ENCODE measurements at regions of chr10 and their contacts with region 1.

Region 1: GRCh38 chr10:123008439-123009205 is at the starts of genes ACADSB and IKZF5:
- DNase-seq: peak; percentile 97
- ATAC-seq: peak; percentile 95 to 96
- H3K4me3 ChIP-seq: peak within 1 kb of the TSS; percentile 95 to 99 (median 97)
- H3K27ac ChIP-seq: peak within 1 kb of the TSS; percentile 93 to 99 (median 96)
- H3K4me1 ChIP-seq: peaks cover 38 to 46% of the 10 kb centered on the region in 2 donors
- H3K27me3 ChIP-seq: no peaks in the 10 kb centered on the region
- CTCF ChIP-seq: no peak
- POLR2A ChIP-seq: peak; percentile 78 to 85
- total RNA-seq, gene ACADSB: 16.2 to 40.2 (median 22.0) TPM
- total RNA-seq, gene IKZF5: 4.3 to 11.0 (median 7.7) TPM

Region 2: GRCh38 chr10:122953827-122954730 is 54.5 kb before region 1 on chr10 and contains the start of gene C10orf88:
- in situ Hi-C with region 1: no loop called
- intact Hi-C with region 1: loop called (anchors 2 kb)
- DNase-seq: peak; percentile 95 to 98
- ATAC-seq: peak; percentile 99
- H3K4me3 ChIP-seq: peak within 1 kb of the TSS; percentile 83 to 92 (median 88)
- H3K27ac ChIP-seq: peak within 1 kb of the TSS; percentile 75 to 86 (median 81)
- H3K4me1 ChIP-seq: peaks cover 10 to 22% of the 10 kb centered on the region in 2 donors
- H3K27me3 ChIP-seq: no peaks in the 10 kb centered on the region
- CTCF ChIP-seq: no peak
- POLR2A ChIP-seq: no peak
- total RNA-seq, gene C10orf88: 4.2 to 9.6 (median 6.8) TPM

Region 3: GRCh38 chr10:122980209-122981065 is 28.2 kb before region 1 on chr10 and contains the start of gene PSTK:
- in situ Hi-C with region 1: no loop called
- intact Hi-C with region 1: loop called (anchors 1 kb)
- DNase-seq: peak; percentile 80 to 84
- ATAC-seq: peak; percentile 97 to 98
- H3K4me3 ChIP-seq: peak within 1 kb of the TSS; percentile 72 to 88 (median 78)
- H3K27ac ChIP-seq: peak within 1 kb of the TSS; percentile 85 to 96 (median 90)
- H3K4me1 ChIP-seq: peaks cover 11 to 12% of the 10 kb centered on the region in 2 donors
- H3K27me3 ChIP-seq: no peaks in the 10 kb centered on the region
- CTCF ChIP-seq: peak; percentile 97 to 98 (median 98)
- POLR2A ChIP-seq: peak in 1 of 2 donors; percentile 45
- total RNA-seq, gene PSTK: 2.2 to 7.0 (median 4.4) TPM

Region 4: DNA sequence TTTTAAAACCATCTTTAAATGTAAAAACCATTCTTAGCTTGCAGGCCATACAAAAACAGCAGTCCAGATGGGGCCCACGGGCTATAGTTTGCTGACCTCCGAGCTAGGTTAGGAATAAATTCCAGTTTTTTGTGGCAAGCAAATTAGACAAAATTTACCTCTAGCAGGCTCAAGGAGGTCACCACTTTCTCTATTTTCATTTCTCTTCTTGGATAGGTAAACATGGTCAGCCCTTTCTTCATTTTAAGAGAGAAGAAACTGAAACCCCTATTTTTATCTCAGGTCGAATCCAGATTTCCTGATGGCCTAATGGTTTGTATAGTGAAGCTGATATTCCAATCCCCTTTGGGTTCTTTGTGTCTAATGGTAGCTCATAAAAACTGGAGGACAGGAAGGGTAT is 10.8 kb before region 1 on chr10:
- in situ Hi-C with region 1: no loop called
- intact Hi-C with region 1: no loop called
- DNase-seq: no peak
- ATAC-seq: no peak
- H3K4me3 ChIP-seq: no peak overlapping the region
- H3K27ac ChIP-seq: no peak overlapping the region
- H3K4me1 ChIP-seq: peaks cover 4 to 7% of the 10 kb centered on the region in 2 donors
- H3K27me3 ChIP-seq: no peaks in the 10 kb centered on the region
- CTCF ChIP-seq: no peak
- POLR2A ChIP-seq: no peak

Region 5: DNA sequence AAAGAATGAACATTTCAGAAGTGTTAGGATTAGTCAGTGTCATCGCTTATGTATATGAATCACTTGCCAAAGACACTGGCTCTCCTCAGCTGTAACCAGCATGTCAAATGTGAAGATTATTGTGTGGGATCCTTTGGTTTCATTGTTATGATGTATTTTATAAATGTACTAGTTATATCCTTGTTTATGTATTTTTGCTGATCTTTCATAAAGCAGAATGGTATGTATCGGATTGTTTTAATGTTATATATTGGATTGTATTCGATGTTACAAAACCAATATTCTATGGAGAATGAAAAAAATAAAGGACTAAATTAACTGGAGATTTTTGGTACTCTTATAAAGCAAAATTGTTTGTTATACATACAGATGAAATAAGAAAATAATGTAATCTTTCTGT is 49.3 kb after region 1 on chr10:
- in situ Hi-C with region 1: no loop called
- intact Hi-C with region 1: no loop called
- DNase-seq: no peak
- ATAC-seq: no peak
- H3K4me3 ChIP-seq: no peak overlapping the region
- H3K27ac ChIP-seq: no peak overlapping the region
- H3K4me1 ChIP-seq: no peaks in the 10 kb centered on the region
- H3K27me3 ChIP-seq: no peaks in the 10 kb centered on the region
- CTCF ChIP-seq: no peak
- POLR2A ChIP-seq: no peak

Region 6: DNA sequence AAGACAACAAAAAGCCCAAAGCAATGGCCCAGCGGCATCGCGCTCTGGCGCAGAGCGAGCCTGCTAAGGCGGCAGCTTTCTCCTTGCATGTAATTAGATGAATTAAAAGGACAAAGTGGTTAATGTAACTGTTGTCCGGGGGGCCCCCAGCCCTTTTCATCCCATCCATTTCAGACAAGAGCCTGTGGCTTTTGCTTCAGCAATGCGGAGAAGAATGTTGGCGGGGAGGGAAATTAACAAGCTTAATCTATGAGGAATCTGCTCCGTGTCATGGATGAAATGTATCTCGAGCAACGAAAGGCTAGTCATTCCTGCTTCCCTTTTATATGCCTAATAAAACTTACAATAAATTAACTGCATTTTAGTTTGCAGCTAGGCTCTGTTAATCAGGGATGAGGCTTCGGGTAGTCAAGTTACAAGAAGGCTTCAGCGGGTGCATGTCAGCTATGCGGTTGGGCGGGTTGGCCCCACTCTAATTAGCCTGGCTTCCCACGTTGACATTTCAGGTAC is 348.9 kb after region 1 on chr10:
- in situ Hi-C with region 1: no loop called
- intact Hi-C with region 1: no loop called
- DNase-seq: no peak
- ATAC-seq: no peak
- H3K4me3 ChIP-seq: no peak overlapping the region
- H3K27ac ChIP-seq: no peak overlapping the region
- H3K4me1 ChIP-seq: no peaks in the 10 kb centered on the region
- H3K27me3 ChIP-seq: no peaks in the 10 kb centered on the region
- CTCF ChIP-seq: no peak
- POLR2A ChIP-seq: no peak

Region 7: DNA sequence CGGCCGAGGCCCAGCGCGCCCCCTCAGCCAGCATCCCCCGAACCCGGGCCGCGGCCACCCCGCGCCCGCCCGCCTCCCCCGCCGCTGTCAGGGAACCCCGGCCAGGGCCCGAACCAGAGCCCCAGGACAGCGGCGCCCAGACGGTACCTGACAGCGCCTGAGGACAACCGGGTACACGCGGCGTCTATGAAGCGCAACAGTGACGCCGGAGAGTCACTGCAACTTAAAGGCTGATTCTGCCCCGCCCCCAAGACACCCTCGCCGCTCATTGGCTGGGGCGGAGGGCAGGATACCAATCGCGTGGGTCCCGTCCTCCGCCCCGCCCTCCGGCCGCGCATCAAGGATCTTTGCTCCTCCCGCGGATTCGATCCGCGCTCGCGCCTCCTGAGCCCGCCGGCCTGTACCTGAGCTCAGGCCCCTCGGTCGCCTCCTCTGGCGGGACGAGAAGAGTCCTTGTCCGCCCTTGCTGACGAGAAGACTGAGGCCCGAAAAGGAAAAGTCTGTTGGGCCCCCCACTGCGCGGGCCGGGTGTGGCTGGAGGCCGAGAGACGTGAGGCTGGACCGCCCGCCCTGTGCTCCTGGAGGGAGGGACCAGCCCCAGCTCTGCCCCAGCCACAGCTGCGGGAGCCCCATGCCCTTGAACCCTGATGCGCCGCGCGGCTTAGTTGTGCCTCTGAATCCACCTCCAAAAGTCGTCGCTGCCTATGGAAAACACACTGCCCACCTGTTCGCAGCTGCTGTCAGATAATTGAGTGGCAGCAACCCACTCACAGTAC is 1410.3 kb after region 1 on chr10 and contains the start of gene OAT:
- in situ Hi-C with region 1: no loop called
- intact Hi-C with region 1: loop called (anchors 10 kb)
- DNase-seq: peak; percentile 94 to 95
- ATAC-seq: peak; percentile 93
- H3K4me3 ChIP-seq: peak within 1 kb of the TSS; percentile 67 to 86 (median 76)
- H3K27ac ChIP-seq: peak within 1 kb of the TSS; percentile 81 to 95 (median 94)
- H3K4me1 ChIP-seq: peaks cover 31 to 42% of the 10 kb centered on the region in 2 donors
- H3K27me3 ChIP-seq: no peaks in the 10 kb centered on the region
- CTCF ChIP-seq: no peak
- POLR2A ChIP-seq: peak; percentile 98 to 99
- total RNA-seq, gene OAT: 20.1 to 97.2 (median 42.6) TPM

Measured in gastrocnemius medialis (tissue), 4 donors.